ENCODE measurements at regions of chr4 and their contacts with region 1.

Region 1: GRCh38 chr4:39044364-39044955 is 12.3 kb upstream of the TMEM156 start:
- DNase-seq: peak; percentile 99
- ATAC-seq: peak; percentile 85
- H3K4me3 ChIP-seq: peak overlapping the region; percentile 66 to 94 (median 75)
- H3K4me3 Mint-ChIP-seq: peak overlapping the region; percentile 80
- H3K27ac ChIP-seq: peak overlapping the region; percentile 93 to 95
- H3K27ac Mint-ChIP-seq: peak overlapping the region; percentile 90
- H3K4me1 ChIP-seq: peaks cover 45 to 48% of the 10 kb centered on the region in 2 donors
- H3K4me1 Mint-ChIP-seq: peaks cover 59% of the 10 kb centered on the region
- H3K27me3 ChIP-seq: no peaks in the 10 kb centered on the region
- H3K27me3 Mint-ChIP-seq: no peaks in the 10 kb centered on the region
- CTCF ChIP-seq: no peak

Region 2: GRCh38 chr4:37908488-37909331 is 1135.8 kb before region 1 on chr4:
- CTCF ChIA-PET with region 1: no interaction called
- POLR2A ChIA-PET with region 1: no interaction called
- intact Hi-C with region 1: no loop called
- DNase-seq: no peak
- ATAC-seq: no peak
- H3K4me3 ChIP-seq: no peak overlapping the region
- H3K4me3 Mint-ChIP-seq: no peak overlapping the region
- H3K27ac ChIP-seq: no peak overlapping the region
- H3K27ac Mint-ChIP-seq: no peak overlapping the region
- H3K4me1 ChIP-seq: no peaks in the 10 kb centered on the region
- H3K4me1 Mint-ChIP-seq: peaks cover 20% of the 10 kb centered on the region
- H3K27me3 ChIP-seq: no peaks in the 10 kb centered on the region
- H3K27me3 Mint-ChIP-seq: no peaks in the 10 kb centered on the region
- CTCF ChIP-seq: no peak

Region 3: DNA sequence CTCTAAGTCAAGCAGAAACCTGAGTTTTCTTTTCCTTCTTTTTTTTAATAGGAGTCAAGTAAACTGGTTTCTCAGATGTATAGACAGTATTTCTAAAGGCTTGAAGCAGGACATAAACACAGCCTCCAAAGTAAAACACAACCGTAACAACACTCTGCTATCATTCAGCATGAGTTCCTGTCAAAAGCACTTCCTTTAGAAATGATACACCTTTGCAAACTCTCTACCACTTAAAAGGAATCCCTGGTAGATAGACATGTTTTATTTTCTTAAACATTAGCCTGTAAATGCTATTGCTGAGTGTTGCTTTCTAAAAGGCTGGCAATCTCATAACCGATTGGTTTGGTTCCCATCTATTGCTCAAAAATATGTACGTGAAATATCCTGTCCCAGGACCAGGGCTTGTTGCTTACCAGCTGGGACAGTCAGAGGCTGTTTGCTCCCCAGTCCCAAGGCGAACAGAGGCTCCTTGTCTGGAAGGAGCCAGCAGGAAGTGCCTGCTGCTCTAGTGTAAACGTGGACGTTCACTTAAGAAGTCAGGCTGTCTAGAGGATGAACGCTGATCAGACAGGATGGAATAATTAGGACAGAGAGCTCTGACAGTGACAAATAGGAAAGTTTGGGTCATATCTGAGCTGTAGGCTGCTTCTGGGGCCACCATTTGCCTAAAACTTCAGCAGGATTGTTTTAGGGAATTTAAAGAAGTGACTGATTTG is 554.4 kb before region 1 on chr4:
- CTCF ChIA-PET with region 1: no interaction called
- POLR2A ChIA-PET with region 1: interaction called, 10 read pairs
- intact Hi-C with region 1: no loop called
- DNase-seq: no peak
- ATAC-seq: no peak
- H3K4me3 ChIP-seq: no peak overlapping the region
- H3K4me3 Mint-ChIP-seq: no peak overlapping the region
- H3K27ac ChIP-seq: no peak overlapping the region
- H3K27ac Mint-ChIP-seq: no peak overlapping the region
- H3K4me1 ChIP-seq: no peaks in the 10 kb centered on the region
- H3K4me1 Mint-ChIP-seq: no peaks in the 10 kb centered on the region
- H3K27me3 ChIP-seq: no peaks in the 10 kb centered on the region
- H3K27me3 Mint-ChIP-seq: peaks cover 4% of the 10 kb centered on the region
- CTCF ChIP-seq: no peak

Region 4: DNA sequence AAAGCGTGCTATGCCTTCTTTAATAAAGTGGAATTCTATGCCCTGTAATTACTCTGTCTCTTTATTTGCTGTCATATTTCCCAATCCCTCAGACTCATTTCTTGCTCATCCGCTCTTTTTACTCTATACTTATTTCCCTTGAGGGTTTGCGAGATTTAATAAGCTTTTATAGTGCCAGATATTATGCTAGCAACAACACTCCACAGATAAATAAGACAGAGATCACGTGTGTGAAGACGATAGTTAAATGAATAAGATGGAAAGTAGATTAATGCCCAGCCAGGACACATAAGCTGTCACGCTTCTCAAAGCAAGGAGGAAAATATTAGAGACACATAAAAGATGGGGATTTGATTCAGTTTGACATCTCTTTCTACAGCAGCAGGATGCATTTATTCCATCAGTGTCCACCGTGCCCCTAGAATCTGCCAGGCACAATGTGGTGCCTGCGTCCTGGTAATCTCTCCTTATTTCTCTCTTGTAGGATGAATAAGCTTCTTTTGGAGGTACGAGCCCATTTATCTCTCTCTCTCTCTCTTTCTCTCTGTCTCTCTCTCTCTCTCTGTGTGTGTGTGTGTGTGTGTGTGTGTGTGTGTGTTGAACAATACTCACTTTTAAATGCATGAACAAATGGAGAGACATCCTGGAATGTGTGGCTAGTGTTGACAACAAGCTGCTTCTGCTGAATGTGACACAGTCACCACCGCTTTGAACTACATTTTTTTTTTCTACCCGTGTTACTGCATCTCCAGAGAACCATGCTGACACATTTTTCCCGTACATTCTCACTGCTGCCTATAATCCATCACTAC is 60.5 kb before region 1 on chr4:
- CTCF ChIA-PET with region 1: interaction called, 18 read pairs
- POLR2A ChIA-PET with region 1: interaction called, 5 read pairs
- intact Hi-C with region 1: loop called (anchors 2 kb)
- DNase-seq: no peak
- ATAC-seq: no peak
- H3K4me3 ChIP-seq: no peak overlapping the region
- H3K4me3 Mint-ChIP-seq: peak overlapping the region; percentile 21
- H3K27ac ChIP-seq: peak overlapping the region in 1 of 2 donors; percentile 86
- H3K27ac Mint-ChIP-seq: peak overlapping the region; percentile 42
- H3K4me1 ChIP-seq: peaks cover 35 to 37% of the 10 kb centered on the region in 2 donors
- H3K4me1 Mint-ChIP-seq: peaks cover 53% of the 10 kb centered on the region
- H3K27me3 ChIP-seq: no peaks in the 10 kb centered on the region
- H3K27me3 Mint-ChIP-seq: no peaks in the 10 kb centered on the region
- CTCF ChIP-seq: no peak

Region 5: GRCh38 chr4:39032218-39033085 is 12.0 kb before region 1 on chr4 and contains the start of gene TMEM156:
- CTCF ChIA-PET with region 1: interaction called, 41 read pairs
- POLR2A ChIA-PET with region 1: interaction called, 30 read pairs
- intact Hi-C with region 1: loop called (anchors 1 kb)
- DNase-seq: peak; percentile 78
- ATAC-seq: peak; percentile 68
- H3K4me3 ChIP-seq: peak within 1 kb of the TSS; percentile 63 to 98 (median 69)
- H3K4me3 Mint-ChIP-seq: peak within 1 kb of the TSS; percentile 85
- H3K27ac ChIP-seq: peak within 1 kb of the TSS; percentile 72 to 84
- H3K27ac Mint-ChIP-seq: peak within 1 kb of the TSS; percentile 87
- H3K4me1 ChIP-seq: peaks cover 27 to 36% of the 10 kb centered on the region in 2 donors
- H3K4me1 Mint-ChIP-seq: peaks cover 54% of the 10 kb centered on the region
- H3K27me3 ChIP-seq: no peaks in the 10 kb centered on the region
- H3K27me3 Mint-ChIP-seq: no peaks in the 10 kb centered on the region
- CTCF ChIP-seq: no peak
- total RNA-seq, gene TMEM156: 59.9 and 61.4 TPM in 2 replicates

Region 6: DNA sequence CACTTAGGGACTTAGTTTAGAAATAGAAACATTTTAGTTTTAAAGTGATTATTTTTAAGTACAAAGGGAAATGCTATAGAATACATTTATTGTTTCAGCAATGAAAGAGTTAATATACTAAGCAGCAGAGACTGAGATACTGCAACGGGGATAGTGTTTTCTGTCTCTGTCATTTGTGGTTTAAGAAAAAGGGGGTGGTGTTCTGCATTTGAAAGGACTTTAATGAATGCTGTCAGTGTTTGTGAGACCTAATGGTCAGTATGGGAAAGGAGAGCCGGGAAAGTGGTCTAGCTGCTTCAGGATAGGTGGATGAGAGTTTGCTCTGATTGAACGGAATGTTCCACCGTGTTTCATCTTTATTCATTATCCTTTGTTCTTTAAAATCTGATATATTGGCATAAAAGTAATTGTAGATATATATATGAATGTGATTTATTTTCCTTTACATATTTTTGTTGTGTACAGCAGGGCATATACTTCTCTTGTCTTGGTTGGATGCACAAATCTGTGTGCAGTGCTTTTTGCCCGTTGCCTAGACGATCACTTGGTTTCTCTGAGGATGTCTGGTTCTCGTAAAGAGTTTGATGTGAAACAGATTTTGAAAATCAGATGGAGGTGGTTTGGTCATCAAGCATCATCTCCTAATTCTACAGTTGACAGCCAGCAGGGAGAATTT is 17.8 kb after region 1 on chr4 and contains the start of gene KLHL5:
- CTCF ChIA-PET with region 1: interaction called, 6 read pairs
- POLR2A ChIA-PET with region 1: no interaction called
- intact Hi-C with region 1: loop called (anchors 2 kb)
- DNase-seq: no peak
- ATAC-seq: no peak
- H3K4me3 ChIP-seq: no peak within 1 kb of the TSS
- H3K4me3 Mint-ChIP-seq: peak within 1 kb of the TSS; percentile 17
- H3K27ac ChIP-seq: no peak within 1 kb of the TSS
- H3K27ac Mint-ChIP-seq: peak within 1 kb of the TSS; percentile 50
- H3K4me1 ChIP-seq: peaks cover 10 to 23% of the 10 kb centered on the region in 2 donors
- H3K4me1 Mint-ChIP-seq: peaks cover 36% of the 10 kb centered on the region
- H3K27me3 ChIP-seq: no peaks in the 10 kb centered on the region
- H3K27me3 Mint-ChIP-seq: no peaks in the 10 kb centered on the region
- CTCF ChIP-seq: no peak
- total RNA-seq, gene KLHL5: 90.0 and 95.5 TPM in 2 replicates

Region 7: DNA sequence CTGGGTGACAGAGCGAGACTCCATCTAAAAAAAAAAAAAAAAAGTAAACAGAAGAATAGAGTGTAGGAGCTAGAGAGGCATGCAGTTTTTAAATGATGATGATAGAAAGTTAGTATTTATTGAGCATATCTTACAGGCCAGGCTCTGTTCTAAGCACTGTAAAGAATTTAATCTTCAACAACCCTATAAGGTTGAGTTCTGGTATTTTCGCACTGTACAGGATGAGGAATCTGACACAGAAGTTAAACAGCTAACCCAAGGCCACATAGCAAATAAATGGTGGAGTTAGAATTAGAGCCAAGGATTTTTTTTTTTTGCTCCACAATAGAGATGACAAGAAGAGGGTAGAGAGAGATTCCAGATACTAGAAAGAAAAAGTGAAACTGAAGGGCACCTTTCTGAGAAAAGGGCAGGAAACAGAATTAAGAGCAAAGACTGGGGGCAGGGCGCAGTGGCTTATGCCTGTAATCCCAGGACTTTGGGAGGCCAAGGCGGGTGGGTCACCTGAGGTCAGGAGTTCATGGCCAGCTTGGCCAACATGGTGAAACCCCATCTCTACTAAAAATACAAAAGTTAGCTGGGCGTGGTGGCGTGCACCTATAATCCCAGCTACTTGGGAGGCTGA is 73.7 kb after region 1 on chr4:
- CTCF ChIA-PET with region 1: no interaction called
- POLR2A ChIA-PET with region 1: no interaction called
- intact Hi-C with region 1: no loop called
- DNase-seq: no peak
- ATAC-seq: no peak
- H3K4me3 ChIP-seq: no peak overlapping the region
- H3K4me3 Mint-ChIP-seq: no peak overlapping the region
- H3K27ac ChIP-seq: no peak overlapping the region
- H3K27ac Mint-ChIP-seq: no peak overlapping the region
- H3K4me1 ChIP-seq: peaks cover 5 to 7% of the 10 kb centered on the region in 2 donors
- H3K4me1 Mint-ChIP-seq: peaks cover 14% of the 10 kb centered on the region
- H3K27me3 ChIP-seq: no peaks in the 10 kb centered on the region
- H3K27me3 Mint-ChIP-seq: no peaks in the 10 kb centered on the region
- CTCF ChIP-seq: no peak

Region 8: GRCh38 chr4:39181905-39182638 is 137.6 kb after region 1 on chr4 and contains the start of gene WDR19:
- CTCF ChIA-PET with region 1: no interaction called
- POLR2A ChIA-PET with region 1: no interaction called
- intact Hi-C with region 1: loop called (anchors 1 kb)
- DNase-seq: peak; percentile 99
- ATAC-seq: peak; percentile 96
- H3K4me3 ChIP-seq: peak within 1 kb of the TSS; percentile 76 to 99 (median 94)
- H3K4me3 Mint-ChIP-seq: peak within 1 kb of the TSS; percentile 47
- H3K27ac ChIP-seq: peak within 1 kb of the TSS; percentile 12 to 79
- H3K27ac Mint-ChIP-seq: no peak within 1 kb of the TSS
- H3K4me1 ChIP-seq: peaks cover 12 to 16% of the 10 kb centered on the region in 2 donors
- H3K4me1 Mint-ChIP-seq: peaks cover 8% of the 10 kb centered on the region
- H3K27me3 ChIP-seq: no peaks in the 10 kb centered on the region
- H3K27me3 Mint-ChIP-seq: no peaks in the 10 kb centered on the region
- CTCF ChIP-seq: peak; percentile 73
- total RNA-seq, gene WDR19: 79.8 and 83.2 TPM in 2 replicates

Region 9: DNA sequence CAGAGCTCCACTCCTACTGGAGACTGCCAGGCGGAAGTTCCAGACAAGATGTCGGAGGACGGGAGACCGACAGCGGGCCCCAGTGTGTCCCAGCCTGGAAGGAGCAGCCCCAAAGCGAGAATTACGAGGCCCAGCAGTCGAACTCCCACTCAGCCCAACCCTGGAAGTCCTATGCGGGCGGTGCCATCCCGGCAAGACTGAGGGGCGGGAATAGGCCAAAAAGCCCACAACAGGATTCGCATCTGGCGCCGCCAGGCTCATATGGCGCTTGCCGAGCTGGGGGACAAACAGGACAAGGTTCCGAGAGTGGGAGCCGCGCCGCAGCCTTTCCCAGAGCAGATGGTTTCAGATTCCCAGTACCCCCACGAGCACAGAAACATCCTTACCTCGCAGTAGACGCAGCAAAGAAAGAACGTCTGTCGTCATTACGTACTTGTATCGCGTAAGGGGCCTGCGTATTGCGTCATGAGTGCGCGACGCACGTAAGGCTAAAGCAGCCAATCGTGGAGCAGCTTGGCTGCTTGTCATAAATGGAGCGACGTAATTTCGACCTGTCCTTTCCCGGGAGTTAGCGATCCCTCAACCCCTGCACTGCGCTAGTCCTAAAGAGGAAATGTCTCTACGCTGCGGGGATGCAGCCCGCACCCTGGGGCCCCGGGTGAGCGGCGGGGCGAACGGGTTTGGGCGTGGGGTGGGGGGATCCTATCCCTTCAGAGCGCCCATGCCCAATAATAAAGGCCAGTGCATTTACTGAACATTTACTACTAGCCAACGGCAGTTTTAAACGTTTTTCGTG is 414.2 kb after region 1 on chr4 and contains the starts of genes LIAS and RPL9:
- CTCF ChIA-PET with region 1: no interaction called
- POLR2A ChIA-PET with region 1: no interaction called
- intact Hi-C with region 1: loop called (anchors 5 kb)
- DNase-seq: peak; percentile 98
- ATAC-seq: peak; percentile 86
- H3K4me3 ChIP-seq: peak within 1 kb of the TSS; percentile 77 to 100 (median 98)
- H3K4me3 Mint-ChIP-seq: peak within 1 kb of the TSS; percentile 97
- H3K27ac ChIP-seq: peak within 1 kb of the TSS; percentile 98 to 99
- H3K27ac Mint-ChIP-seq: peak within 1 kb of the TSS; percentile 99
- H3K4me1 ChIP-seq: peaks cover 19 to 27% of the 10 kb centered on the region in 2 donors
- H3K4me1 Mint-ChIP-seq: peaks cover 38% of the 10 kb centered on the region
- H3K27me3 ChIP-seq: no peaks in the 10 kb centered on the region
- H3K27me3 Mint-ChIP-seq: no peaks in the 10 kb centered on the region
- CTCF ChIP-seq: no peak
- total RNA-seq, gene LIAS: 20.9 and 24.7 TPM in 2 replicates
- total RNA-seq, gene RPL9: 2,031 and 2,048 TPM in 2 replicates